ENCODE measurements at regions of chr3 and their contacts with region 1.

Region 1: DNA sequence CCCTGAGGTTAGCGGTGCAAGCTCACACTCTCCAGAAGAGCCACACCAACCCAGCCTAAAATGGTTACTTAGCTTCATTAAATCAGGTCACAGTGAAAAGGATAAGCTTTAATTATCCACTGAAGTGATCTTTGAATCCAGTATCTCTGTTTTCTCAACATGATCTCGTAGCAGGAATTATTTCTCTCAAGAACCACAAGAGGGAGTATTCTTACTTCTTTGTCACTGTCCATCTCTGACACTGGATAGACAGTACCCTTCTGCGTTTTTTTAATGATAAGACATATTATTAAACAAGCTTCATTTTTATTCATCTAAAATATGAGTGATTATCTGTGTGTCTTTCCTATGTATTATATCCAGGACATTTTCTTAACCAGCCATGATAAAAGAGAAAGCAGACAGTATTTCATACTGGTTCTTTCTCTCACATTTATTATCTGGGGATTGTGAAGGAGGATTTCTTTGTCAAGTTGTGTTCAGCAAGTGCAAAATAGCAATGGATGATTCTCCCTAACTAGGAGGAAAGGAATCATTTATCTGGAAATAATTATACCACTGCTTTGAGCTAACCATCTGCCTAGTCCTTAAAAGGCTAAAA is 105.4 kb upstream of the CCDC54 start:
- DNase-seq: no peak
- H3K4me3 ChIP-seq: no peak overlapping the region
- H3K27ac ChIP-seq: no peak overlapping the region
- H3K4me1 ChIP-seq: no peaks in the 10 kb centered on the region
- H3K27me3 ChIP-seq: no peaks in the 10 kb centered on the region; a peak in 1 of 7 replicates
- CTCF ChIP-seq: peak in 2 of 3 experiments; percentile 30 to 67; a peak in 2 of 4 replicates
- EP300 ChIP-seq: no peak
- POLR2A ChIP-seq: no peak
- RAD21 ChIP-seq: peak; percentile 71 to 78

Region 2: GRCh38 chr3:106946866-106947265 is 325.0 kb before region 1 on chr3:
- CTCF ChIA-PET with region 1: no interaction called
- POLR2A ChIA-PET with region 1: no interaction called
- DNase-seq: no peak
- H3K4me3 ChIP-seq: no peak overlapping the region
- H3K27ac ChIP-seq: no peak overlapping the region
- H3K4me1 ChIP-seq: no peaks in the 10 kb centered on the region
- H3K27me3 ChIP-seq: no peaks in the 10 kb centered on the region
- CTCF ChIP-seq: no peak
- EP300 ChIP-seq: no peak
- POLR2A ChIP-seq: no peak
- RAD21 ChIP-seq: no peak

Region 3: GRCh38 chr3:107258300-107258699 is 13.6 kb before region 1 on chr3:
- CTCF ChIA-PET with region 1: interaction called, 18 read pairs
- POLR2A ChIA-PET with region 1: no interaction called
- DNase-seq: no peak
- H3K4me3 ChIP-seq: no peak overlapping the region
- H3K27ac ChIP-seq: no peak overlapping the region
- H3K4me1 ChIP-seq: no peaks in the 10 kb centered on the region
- H3K27me3 ChIP-seq: no peaks in the 10 kb centered on the region
- CTCF ChIP-seq: no peak
- EP300 ChIP-seq: no peak
- POLR2A ChIP-seq: no peak
- RAD21 ChIP-seq: no peak

Region 4: GRCh38 chr3:107297597-107297996 is 25.7 kb after region 1 on chr3:
- CTCF ChIA-PET with region 1: no interaction called
- POLR2A ChIA-PET with region 1: no interaction called
- DNase-seq: no peak
- H3K4me3 ChIP-seq: no peak overlapping the region
- H3K27ac ChIP-seq: no peak overlapping the region; the same call in 1 of the 2 replicates
- H3K4me1 ChIP-seq: no peaks in the 10 kb centered on the region
- H3K27me3 ChIP-seq: no peaks in the 10 kb centered on the region
- CTCF ChIP-seq: no peak
- EP300 ChIP-seq: no peak
- POLR2A ChIP-seq: no peak
- RAD21 ChIP-seq: no peak

Region 5: GRCh38 chr3:107414325-107414964 is 142.6 kb after region 1 on chr3:
- CTCF ChIA-PET with region 1: interaction called, 97 read pairs
- POLR2A ChIA-PET with region 1: no interaction called
- DNase-seq: no peak
- H3K4me3 ChIP-seq: no peak overlapping the region
- H3K27ac ChIP-seq: no peak overlapping the region
- H3K4me1 ChIP-seq: no peaks in the 10 kb centered on the region
- H3K27me3 ChIP-seq: no peaks in the 10 kb centered on the region
- CTCF ChIP-seq: no peak
- EP300 ChIP-seq: no peak
- POLR2A ChIP-seq: no peak
- RAD21 ChIP-seq: no peak

Region 6: DNA sequence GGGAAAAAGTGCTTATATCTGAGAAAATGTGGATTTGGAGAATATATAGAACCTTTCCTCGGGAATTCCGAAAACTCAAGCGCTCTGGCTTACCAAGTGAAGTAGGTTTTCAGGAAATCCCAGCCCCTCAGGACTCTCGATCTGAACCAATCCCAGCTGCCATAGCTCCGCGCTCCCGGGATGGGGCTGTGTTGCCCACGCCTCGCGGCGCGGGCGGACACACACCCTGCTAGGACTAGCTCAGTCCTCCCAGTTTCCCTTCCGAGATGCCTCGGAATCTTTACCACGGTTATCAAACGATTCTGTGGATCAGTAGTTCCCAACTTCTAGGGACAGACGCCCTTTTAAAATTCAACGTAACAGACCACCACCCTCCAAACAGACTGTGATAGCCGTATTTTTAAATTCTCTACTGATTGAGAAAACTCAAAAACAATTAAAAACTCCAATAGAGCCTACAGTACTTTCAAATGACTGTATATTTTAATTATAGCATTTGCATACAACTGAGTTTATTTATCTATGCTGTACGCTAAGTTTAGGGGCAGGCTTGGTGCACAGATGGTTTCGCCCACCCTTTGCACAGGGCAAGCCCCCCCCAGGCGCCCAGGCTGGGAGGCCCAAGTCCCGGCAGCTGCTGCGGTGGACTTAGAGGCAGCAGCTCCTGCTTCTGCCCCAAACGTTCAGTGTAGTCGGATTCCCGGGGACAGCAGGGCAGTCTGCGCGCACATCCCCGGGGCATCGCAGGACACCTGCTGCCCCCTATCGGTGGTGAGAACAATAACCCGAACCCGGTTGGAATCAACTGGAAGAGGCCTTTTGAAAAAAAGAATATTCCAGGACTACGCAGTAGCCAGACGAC is 157.7 kb after region 1 on chr3:
- CTCF ChIA-PET with region 1: interaction called, 51 read pairs
- POLR2A ChIA-PET with region 1: interaction called, 3 read pairs
- DNase-seq: peak; percentile 68 to 81
- H3K4me3 ChIP-seq: peak overlapping the region; percentile 37 to 76 (median 73)
- H3K27ac ChIP-seq: no peak overlapping the region
- H3K4me1 ChIP-seq: peaks cover 0 to 7% (median 5%) of the 10 kb centered on the region in 4 experiments; a peak in 5 of 7 replicates
- H3K27me3 ChIP-seq: peaks cover 0 to 17% (median 12%) of the 10 kb centered on the region in 4 experiments; a peak in 6 of 7 replicates
- CTCF ChIP-seq: peak; percentile 78 to 86 (median 86)
- EP300 ChIP-seq: no peak
- POLR2A ChIP-seq: 0 out of 3 replicates have a peak, but pooled peaks of 1 of the 2 experiments have one; percentile 41
- RAD21 ChIP-seq: peak; percentile 76 to 82

Region 7: DNA sequence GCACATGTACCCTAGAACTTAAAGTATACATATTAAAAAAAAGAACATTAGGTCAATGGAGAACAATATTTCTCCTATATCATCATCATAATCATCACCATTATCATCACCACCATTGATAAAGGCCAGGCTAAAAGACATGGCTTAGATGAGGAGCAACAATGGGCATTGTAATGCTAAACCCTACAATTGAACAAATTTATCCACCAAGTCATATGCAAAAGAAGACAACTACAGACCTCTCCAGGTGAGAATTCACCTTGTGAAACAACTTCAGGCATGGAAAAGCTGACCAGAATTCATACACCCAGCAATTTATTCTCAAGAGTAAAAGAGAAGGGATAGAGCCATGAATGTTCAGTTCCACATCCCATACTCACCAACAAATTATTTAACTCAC is 204.6 kb after region 1 on chr3:
- CTCF ChIA-PET with region 1: no interaction called
- POLR2A ChIA-PET with region 1: no interaction called
- DNase-seq: no peak
- H3K4me3 ChIP-seq: no peak overlapping the region; a peak in 1 of 8 replicates
- H3K27ac ChIP-seq: no peak overlapping the region
- H3K4me1 ChIP-seq: no peaks in the 10 kb centered on the region; a peak in 1 of 7 replicates
- H3K27me3 ChIP-seq: peaks cover 0 to 1% (median 0%) of the 10 kb centered on the region in 4 experiments; a peak in 1 of 7 replicates
- CTCF ChIP-seq: no peak
- EP300 ChIP-seq: no peak
- POLR2A ChIP-seq: no peak
- RAD21 ChIP-seq: no peak

Region 8: GRCh38 chr3:107543666-107544065 is 271.8 kb after region 1 on chr3:
- CTCF ChIA-PET with region 1: interaction called, 11 read pairs
- POLR2A ChIA-PET with region 1: no interaction called
- DNase-seq: no peak
- H3K4me3 ChIP-seq: no peak overlapping the region
- H3K27ac ChIP-seq: no peak overlapping the region
- H3K4me1 ChIP-seq: peaks cover 0 to 5% (median 3%) of the 10 kb centered on the region in 4 experiments; a peak in 2 of 7 replicates
- H3K27me3 ChIP-seq: no peaks in the 10 kb centered on the region
- CTCF ChIP-seq: peak in 2 of 3 experiments; percentile 20 to 25; a peak in 2 of 4 replicates
- EP300 ChIP-seq: no peak
- POLR2A ChIP-seq: no peak
- RAD21 ChIP-seq: peak; percentile 58 to 60